ENCODE measurements at regions of chr13 and their contacts with region 1.

Region 1: DNA sequence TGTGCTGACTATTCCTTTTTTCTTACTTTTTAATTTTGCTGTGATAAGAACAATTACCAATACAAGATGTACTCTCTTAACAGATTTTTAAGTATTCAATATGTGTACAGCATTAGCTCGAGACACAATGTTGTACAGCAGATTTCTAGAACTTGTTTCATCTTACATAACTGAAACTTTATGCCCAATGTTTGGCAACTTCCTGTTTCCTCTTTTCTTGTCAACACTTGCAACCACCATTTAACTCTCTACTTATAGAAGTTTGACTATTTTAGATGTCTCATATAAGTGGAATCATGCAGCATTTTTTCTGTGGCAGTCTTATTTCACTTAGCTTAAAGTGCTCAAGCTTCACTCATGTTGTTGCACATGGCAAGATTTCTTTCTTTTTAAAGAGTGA is 1426.8 kb downstream of the SLITRK5 start:
- DNase-seq: no peak
- H3K4me3 ChIP-seq: no peak overlapping the region
- H3K27ac ChIP-seq: no peak overlapping the region
- H3K4me1 ChIP-seq: no peaks in the 10 kb centered on the region
- H3K27me3 ChIP-seq: no peaks in the 10 kb centered on the region
- CTCF ChIP-seq: no peak
- POLR2A ChIP-seq: no peak

Region 2: GRCh38 chr13:87712012-87712411 is 1386.0 kb before region 1 on chr13:
- intact Hi-C with region 1: loop called (anchors 5 kb)
- DNase-seq: no peak
- H3K4me3 ChIP-seq: no peak overlapping the region
- H3K27ac ChIP-seq: no peak overlapping the region
- H3K4me1 ChIP-seq: no peaks in the 10 kb centered on the region
- H3K27me3 ChIP-seq: no peaks in the 10 kb centered on the region
- CTCF ChIP-seq: no peak
- POLR2A ChIP-seq: no peak

Region 3: GRCh38 chr13:89267734-89268133 is 169.7 kb after region 1 on chr13:
- intact Hi-C with region 1: no loop called
- DNase-seq: no peak
- H3K4me3 ChIP-seq: no peak overlapping the region
- H3K27ac ChIP-seq: no peak overlapping the region
- H3K4me1 ChIP-seq: no peaks in the 10 kb centered on the region
- H3K27me3 ChIP-seq: no peaks in the 10 kb centered on the region
- CTCF ChIP-seq: no peak
- POLR2A ChIP-seq: no peak